CD4-positive, alpha-beta T cell (primary cell): ENCODE measurements at regions of chr16 and their contacts with region 1.

Region 1: GRCh38 chr16:75519881-75520280 is 16.0 kb downstream of the CHST5 start:
- DNase-seq: no peak
- ATAC-seq: no peak
- H3K4me3 ChIP-seq: no peak overlapping the region
- H3K4me3 Mint-ChIP-seq: no peak overlapping the region
- H3K27ac ChIP-seq: no peak overlapping the region
- H3K27ac Mint-ChIP-seq: no peak overlapping the region
- H3K4me1 ChIP-seq: peaks cover 12% of the 10 kb centered on the region
- H3K4me1 Mint-ChIP-seq: peaks cover 14% of the 10 kb centered on the region
- H3K27me3 ChIP-seq: no peaks in the 10 kb centered on the region
- H3K27me3 Mint-ChIP-seq: no peaks in the 10 kb centered on the region
- CTCF ChIP-seq: no peak

Region 2: DNA sequence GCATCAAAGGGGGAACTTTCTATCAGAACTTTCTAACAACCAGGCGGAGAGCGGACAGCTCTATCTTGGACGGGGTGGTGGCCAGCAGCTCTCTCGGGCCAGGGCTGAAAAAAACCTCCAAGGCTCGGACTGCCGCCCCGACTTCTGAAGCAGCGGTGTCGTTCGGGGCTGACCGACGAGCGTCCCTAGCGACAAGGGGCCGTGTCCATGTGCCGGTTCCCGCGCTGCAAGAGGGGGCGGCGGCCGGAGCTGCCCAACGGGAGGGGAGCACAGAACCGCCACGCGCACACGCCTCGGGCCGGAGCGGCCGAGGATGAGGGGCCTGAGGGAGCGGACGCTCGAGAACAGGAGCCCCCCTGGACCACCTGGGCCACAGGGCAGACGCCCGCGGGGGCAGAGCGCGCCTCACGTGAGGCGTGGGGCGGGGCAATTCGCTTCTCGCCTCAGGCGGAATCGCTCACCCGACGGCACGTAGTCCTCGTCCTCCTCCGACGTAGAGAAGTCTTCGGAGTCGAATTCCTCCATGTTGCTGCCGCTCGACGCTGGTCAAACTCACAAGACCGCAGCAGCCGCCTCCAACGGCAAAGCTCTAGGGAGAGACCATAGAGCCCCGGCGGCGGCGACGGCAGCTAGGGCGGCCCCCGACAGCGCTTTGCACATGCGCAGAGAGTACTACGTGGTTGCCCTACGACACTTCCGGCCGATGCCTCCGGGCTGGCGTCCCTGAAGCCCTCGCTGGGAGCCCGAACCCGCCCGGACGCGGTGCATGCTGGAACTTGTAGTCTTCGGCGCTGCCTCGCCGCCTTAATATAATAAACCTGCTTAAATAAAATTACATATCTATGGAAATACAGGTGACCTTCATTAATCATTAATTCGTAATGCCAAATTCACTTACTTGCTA is 86.8 kb before region 1 on chr16 and contains the start of gene CFDP1:
- CTCF ChIA-PET with region 1: interaction called, 7 read pairs
- POLR2A ChIA-PET with region 1: interaction called, 16 read pairs
- intact Hi-C with region 1: loop called in 1 of 2 experiments (anchors 10 kb)
- DNase-seq: peak; percentile 92 to 98 (median 94)
- ATAC-seq: peak; percentile 79
- H3K4me3 ChIP-seq: peak within 1 kb of the TSS; percentile 83
- H3K4me3 Mint-ChIP-seq: peak within 1 kb of the TSS; percentile 94
- H3K27ac ChIP-seq: peak within 1 kb of the TSS; percentile 96 to 97
- H3K27ac Mint-ChIP-seq: peak within 1 kb of the TSS; percentile 96
- H3K4me1 ChIP-seq: peaks cover 33% of the 10 kb centered on the region
- H3K4me1 Mint-ChIP-seq: peaks cover 28% of the 10 kb centered on the region
- H3K27me3 ChIP-seq: no peaks in the 10 kb centered on the region
- H3K27me3 Mint-ChIP-seq: no peaks in the 10 kb centered on the region
- CTCF ChIP-seq: no peak
- total RNA-seq, gene CFDP1: 23.0 to 25.5 TPM

Region 3: DNA sequence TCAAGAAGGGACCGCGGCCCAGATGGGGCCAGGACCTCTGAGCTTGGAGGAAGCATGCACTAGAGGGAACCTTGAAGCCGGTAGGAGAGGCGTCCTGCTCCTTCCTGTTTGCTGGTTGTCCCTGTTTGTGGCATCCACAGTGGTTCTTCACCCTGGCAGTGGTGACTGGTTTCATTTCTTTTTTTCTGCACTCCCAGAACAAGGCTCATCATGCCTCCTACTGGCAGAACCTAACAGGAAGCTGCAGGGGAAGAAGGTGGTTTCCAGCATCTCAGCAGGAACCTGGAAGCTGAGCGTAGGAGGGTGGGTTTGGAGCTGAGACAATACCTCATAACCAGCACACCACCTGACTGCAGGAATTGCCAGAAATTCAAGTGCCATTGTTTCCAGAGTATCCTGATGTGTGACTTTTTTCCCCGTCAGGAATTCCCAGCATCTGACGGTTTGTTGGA is 30.4 kb after region 1 on chr16:
- CTCF ChIA-PET with region 1: interaction called, 18 read pairs
- POLR2A ChIA-PET with region 1: interaction called, 14 read pairs
- intact Hi-C with region 1: no loop called
- DNase-seq: peak in 4 of 14 experiments; percentile 14 to 76 (median 60)
- ATAC-seq: peak; percentile 73
- H3K4me3 ChIP-seq: no peak overlapping the region
- H3K4me3 Mint-ChIP-seq: no peak overlapping the region
- H3K27ac ChIP-seq: no peak overlapping the region
- H3K27ac Mint-ChIP-seq: no peak overlapping the region
- H3K4me1 ChIP-seq: peaks cover 9% of the 10 kb centered on the region
- H3K4me1 Mint-ChIP-seq: peaks cover 1% of the 10 kb centered on the region
- H3K27me3 ChIP-seq: no peaks in the 10 kb centered on the region
- H3K27me3 Mint-ChIP-seq: peaks cover 8% of the 10 kb centered on the region
- CTCF ChIP-seq: no peak

Region 4: DNA sequence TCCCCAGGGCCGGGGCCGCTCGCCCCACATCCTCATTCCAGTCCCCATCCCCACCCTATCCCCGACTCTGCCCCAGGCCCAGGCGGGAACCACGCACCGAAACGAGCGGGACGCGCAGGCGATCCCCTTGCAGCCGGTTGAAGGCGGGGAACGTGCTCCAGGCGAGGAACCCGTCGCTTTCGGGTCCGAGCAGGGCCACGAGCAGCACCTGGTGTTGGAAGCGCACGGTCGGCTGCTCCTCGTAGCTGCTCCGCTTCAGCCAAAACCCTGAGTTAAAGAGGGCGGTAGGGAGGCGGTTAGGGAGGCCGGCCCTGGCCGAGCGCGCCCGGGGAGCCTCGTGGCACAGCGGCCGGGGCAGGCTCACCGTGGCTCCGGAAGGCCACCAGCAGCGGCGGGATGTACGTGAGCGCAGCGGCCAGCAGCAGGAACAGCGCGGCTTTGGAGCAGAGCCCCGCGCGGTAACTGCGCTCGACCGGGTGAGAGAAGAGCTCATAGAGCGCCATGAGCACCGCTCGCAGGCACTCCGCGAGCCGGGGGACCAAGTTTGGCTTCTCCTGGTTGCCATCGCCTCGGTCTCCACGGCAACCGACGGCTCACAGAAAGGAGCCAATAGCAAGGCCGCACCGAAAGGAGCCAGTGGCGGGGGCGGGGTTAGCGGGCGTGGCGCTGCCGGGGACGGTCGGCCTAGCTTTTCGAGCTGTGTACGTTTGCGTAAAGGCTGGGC is 36.0 kb after region 1 on chr16 and contains the start of gene TMEM231:
- CTCF ChIA-PET with region 1: interaction called, 18 read pairs
- POLR2A ChIA-PET with region 1: interaction called, 14 read pairs
- intact Hi-C with region 1: loop called (anchors 2 kb)
- DNase-seq: peak; percentile 95 to 99 (median 97)
- ATAC-seq: peak; percentile 97
- H3K4me3 ChIP-seq: peak within 1 kb of the TSS; percentile 74
- H3K4me3 Mint-ChIP-seq: peak within 1 kb of the TSS; percentile 88
- H3K27ac ChIP-seq: peak within 1 kb of the TSS; percentile 58 to 82
- H3K27ac Mint-ChIP-seq: peak within 1 kb of the TSS; percentile 65
- H3K4me1 ChIP-seq: peaks cover 18% of the 10 kb centered on the region
- H3K4me1 Mint-ChIP-seq: peaks cover 13% of the 10 kb centered on the region
- H3K27me3 ChIP-seq: peaks cover 0 to 3% of the 10 kb centered on the region in 2 experiments
- H3K27me3 Mint-ChIP-seq: peaks cover 8% of the 10 kb centered on the region
- CTCF ChIP-seq: no peak
- total RNA-seq, gene TMEM231: 2.5 TPM